Astrocyte of the cerebellum (primary cell): ENCODE measurements at regions of chr1 and their contacts with region 1.

Region 1: GRCh38 chr1:59266180-59266926 is 30.5 kb upstream of the FGGY start:
- DNase-seq: no peak
- H3K4me3 ChIP-seq: no peak overlapping the region
- CTCF ChIP-seq: no peak

Region 2: GRCh38 chr1:59212706-59213105 is 53.6 kb before region 1 on chr1:
- in situ Hi-C with region 1: no loop called
- DNase-seq: no peak
- H3K4me3 ChIP-seq: no peak overlapping the region
- CTCF ChIP-seq: no peak

Region 3: GRCh38 chr1:59354709-59355337 is 88.5 kb after region 1 on chr1:
- in situ Hi-C with region 1: loop called (anchors 5 kb)
- DNase-seq: no peak
- H3K4me3 ChIP-seq: no peak overlapping the region
- CTCF ChIP-seq: no peak